Activated CD4-positive, alpha-beta T cell treated with anti-CD3 and anti-CD28 coated beads, Interleukin-2, amount 10 ng/mL, durations not matched to agents 24 days and 14 days (primary cell): ENCODE measurements at regions of chr3 and their contacts with region 1.

Region 1: GRCh38 chr3:47522082-47522987 is 8.8 kb upstream of the ELP6 start:
- DNase-seq: peak; percentile 93
- H3K4me3 Mint-ChIP-seq: no peak overlapping the region
- H3K27ac Mint-ChIP-seq: peak overlapping the region; percentile 41
- H3K4me1 Mint-ChIP-seq: peaks cover 4% of the 10 kb centered on the region
- H3K27me3 Mint-ChIP-seq: no peaks in the 10 kb centered on the region

Region 2: GRCh38 chr3:47578119-47578632 is 55.8 kb after region 1 on chr3:
- intact Hi-C with region 1: loop called (anchors 5 kb)
- DNase-seq: peak; percentile 87
- H3K4me3 Mint-ChIP-seq: peak overlapping the region; percentile 73
- H3K27ac Mint-ChIP-seq: no peak overlapping the region
- H3K4me1 Mint-ChIP-seq: no peaks in the 10 kb centered on the region
- H3K27me3 Mint-ChIP-seq: peaks cover 34% of the 10 kb centered on the region

Region 3: DNA sequence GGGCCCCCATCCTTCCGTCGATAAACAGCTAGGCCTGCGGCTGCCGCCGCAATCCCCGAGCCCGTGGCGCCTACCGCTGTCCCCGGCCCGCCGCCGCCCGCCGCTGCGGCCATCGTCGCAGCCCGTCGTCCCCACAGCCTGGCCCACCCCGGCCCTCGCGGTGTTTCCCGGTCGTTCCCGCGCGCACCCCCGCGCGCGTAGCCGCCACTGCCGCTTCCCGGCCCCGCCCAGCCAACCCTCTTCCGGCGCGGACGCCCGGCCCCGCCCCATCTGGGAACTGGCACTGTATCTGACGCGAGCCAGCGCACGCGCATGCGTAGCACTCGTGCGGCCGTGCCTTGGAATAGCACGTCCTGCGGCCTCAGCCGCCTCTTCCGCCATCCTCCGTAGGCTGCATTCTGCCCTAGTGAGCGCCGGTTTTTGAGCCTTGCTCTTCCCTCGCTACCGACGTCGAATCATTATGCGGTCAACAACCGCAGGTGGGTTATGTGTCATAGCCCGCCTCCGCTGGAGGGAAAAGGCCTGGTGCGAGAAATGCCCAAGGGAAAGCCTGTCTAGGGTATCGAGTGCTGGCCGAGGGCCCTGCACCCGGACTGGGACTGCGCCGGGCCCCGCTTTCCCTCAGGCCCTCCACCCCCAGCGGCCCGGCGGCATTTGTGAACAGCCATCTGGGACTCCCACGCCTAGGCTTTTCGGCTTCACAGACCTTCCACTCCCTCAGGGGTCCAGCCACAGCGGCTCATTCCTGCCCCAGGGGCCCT is 259.5 kb after region 1 on chr3 and contains the start of gene SMARCC1:
- intact Hi-C with region 1: no loop called
- DNase-seq: peak; percentile 100
- H3K4me3 Mint-ChIP-seq: peak within 1 kb of the TSS; percentile 96
- H3K27ac Mint-ChIP-seq: peak within 1 kb of the TSS; percentile 100
- H3K4me1 Mint-ChIP-seq: peaks cover 22% of the 10 kb centered on the region
- H3K27me3 Mint-ChIP-seq: peaks cover 1% of the 10 kb centered on the region
- total RNA-seq, gene SMARCC1: 148 and 156 TPM in 2 replicates

Region 4: GRCh38 chr3:47824541-47825473 is 302.5 kb after region 1 on chr3:
- intact Hi-C with region 1: loop called (anchors 1 kb)
- DNase-seq: peak; percentile 95
- H3K4me3 Mint-ChIP-seq: peak overlapping the region; percentile 93
- H3K27ac Mint-ChIP-seq: peak overlapping the region; percentile 83
- H3K4me1 Mint-ChIP-seq: peaks cover 31% of the 10 kb centered on the region
- H3K27me3 Mint-ChIP-seq: no peaks in the 10 kb centered on the region

Region 5: DNA sequence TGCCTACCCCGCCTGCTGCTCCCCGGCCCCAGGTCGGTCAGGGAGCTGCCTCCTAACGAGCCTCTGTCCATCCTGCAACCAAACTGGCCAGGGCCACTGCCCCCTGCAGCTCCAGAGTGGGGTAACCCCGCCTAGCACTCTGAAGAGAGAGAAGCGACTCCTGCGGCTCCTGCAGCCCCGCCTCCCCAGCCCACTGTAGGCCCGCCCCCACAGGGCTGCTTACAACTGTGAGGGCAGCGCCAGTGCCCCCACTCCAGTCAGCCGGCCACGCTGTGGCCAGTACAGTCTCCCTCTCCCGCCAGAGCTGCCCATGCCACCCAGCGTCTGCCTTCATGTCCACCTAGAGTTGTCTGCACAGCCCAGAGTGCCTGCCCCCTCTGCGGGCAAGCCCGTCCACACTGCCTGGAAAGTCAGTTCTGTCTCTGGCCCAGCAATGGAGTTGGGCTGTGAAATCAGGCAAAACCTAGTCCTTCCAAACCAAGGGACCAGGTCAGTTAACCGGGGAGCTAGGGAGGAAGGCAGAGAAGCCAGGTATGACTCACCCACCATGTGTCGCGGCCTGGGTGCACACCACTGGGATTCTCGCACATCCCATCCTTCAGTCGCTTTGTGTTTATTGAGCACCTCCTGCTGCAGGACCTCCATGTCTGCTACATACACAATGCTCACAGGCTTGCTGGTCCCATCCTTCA is 1038.9 kb after region 1 on chr3:
- intact Hi-C with region 1: no loop called
- DNase-seq: peak; percentile 69
- H3K4me3 Mint-ChIP-seq: peak overlapping the region; percentile 28
- H3K27ac Mint-ChIP-seq: no peak overlapping the region
- H3K4me1 Mint-ChIP-seq: peaks cover 31% of the 10 kb centered on the region
- H3K27me3 Mint-ChIP-seq: no peaks in the 10 kb centered on the region